ENCODE measurements at regions of chr2 and their contacts with region 1.

Region 1: DNA sequence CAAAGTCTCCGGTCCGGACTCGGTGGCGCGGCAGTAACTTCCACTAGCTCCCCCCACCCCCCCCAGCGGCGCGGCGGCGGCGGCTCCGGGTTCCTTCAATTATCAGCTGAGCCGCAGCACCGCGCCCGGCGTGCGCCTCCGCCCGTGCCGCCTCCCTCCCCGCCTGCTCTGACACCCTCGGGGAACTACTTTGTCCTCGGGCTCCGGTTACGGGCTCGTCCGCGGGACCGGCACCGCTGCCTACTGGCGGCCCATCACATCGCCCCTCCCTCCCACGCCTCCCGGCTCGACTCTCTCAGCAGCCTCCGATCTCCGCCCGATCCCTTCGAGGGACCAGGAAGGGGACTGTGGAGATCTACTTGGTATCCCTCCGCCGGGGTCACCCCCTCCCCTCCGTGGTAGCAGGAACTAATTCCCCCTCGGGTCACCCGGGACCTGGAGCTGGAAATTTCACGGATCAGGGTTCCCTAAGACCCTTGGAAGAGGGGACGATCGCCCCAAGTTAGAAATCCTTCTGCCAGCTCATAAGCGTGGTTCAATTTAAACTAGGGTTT is at the start of gene TRIP12:
- DNase-seq: peak; percentile 98
- ATAC-seq: peak; percentile 90
- H3K4me3 ChIP-seq: peak within 1 kb of the TSS; percentile 75
- H3K27ac ChIP-seq: peak within 1 kb of the TSS; percentile 92
- H3K4me1 ChIP-seq: 0 out of 2 replicates have a peak, but pooled peaks cover 2% of the 10 kb centered on the region
- H3K27me3 ChIP-seq: no peaks in the 10 kb centered on the region
- CTCF ChIP-seq: no peak
- POLR2A ChIP-seq: no peak
- RAD21 ChIP-seq: no peak
- total RNA-seq, gene TRIP12: 209 and 315 TPM in 2 replicates

Region 2: DNA sequence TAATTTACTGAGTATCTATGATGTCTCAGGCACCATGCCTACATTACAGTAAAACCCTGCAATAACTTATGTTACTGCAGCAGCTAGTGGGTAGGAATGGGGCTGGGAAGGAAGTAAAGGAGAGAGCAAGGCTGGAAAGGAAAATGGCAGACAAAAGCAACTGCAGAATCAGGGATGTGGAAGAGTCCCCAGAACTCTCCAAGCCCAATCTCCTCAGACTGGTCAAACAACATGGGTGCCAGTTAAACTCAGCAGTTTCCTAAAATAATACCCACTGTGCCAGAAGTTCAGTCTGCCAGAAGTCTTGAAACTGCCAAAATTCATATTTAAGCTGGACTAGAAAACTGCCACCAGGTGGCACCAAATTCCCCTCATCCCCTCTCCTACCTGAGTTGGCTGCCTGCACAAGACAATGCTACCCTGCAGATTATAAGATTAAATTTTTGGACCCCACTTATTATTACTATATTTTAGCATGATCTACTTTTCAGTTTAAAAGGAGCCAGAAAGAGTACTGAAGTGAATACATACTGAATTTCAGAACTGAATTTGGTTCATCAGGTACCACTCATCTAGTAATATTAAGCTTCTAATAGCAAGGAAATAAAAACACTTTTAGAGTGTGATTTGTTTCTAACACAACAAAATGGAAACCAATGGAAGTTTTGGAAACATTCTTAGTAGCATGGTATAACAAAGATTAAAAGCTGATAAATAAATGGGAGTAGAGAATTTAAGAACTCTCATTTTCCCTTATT is 120.8 kb before region 1 on chr2:
- CTCF ChIA-PET with region 1: no interaction called
- POLR2A ChIA-PET with region 1: no interaction called
- dilution Hi-C with region 1: no loop called
- in situ Hi-C with region 1: no loop called
- intact Hi-C with region 1: loop called (anchors 5 kb)
- DNase-seq: peak; percentile 65
- ATAC-seq: peak; percentile 45
- H3K4me3 ChIP-seq: no peak overlapping the region
- H3K27ac ChIP-seq: peak overlapping the region; percentile 45; the same call in 1 of the 2 replicates
- H3K4me1 ChIP-seq: peaks cover 2% of the 10 kb centered on the region; the same call in 1 of the 2 replicates
- H3K27me3 ChIP-seq: no peaks in the 10 kb centered on the region
- CTCF ChIP-seq: peak; percentile 63
- POLR2A ChIP-seq: no peak
- RAD21 ChIP-seq: peak; percentile 56

Region 3: DNA sequence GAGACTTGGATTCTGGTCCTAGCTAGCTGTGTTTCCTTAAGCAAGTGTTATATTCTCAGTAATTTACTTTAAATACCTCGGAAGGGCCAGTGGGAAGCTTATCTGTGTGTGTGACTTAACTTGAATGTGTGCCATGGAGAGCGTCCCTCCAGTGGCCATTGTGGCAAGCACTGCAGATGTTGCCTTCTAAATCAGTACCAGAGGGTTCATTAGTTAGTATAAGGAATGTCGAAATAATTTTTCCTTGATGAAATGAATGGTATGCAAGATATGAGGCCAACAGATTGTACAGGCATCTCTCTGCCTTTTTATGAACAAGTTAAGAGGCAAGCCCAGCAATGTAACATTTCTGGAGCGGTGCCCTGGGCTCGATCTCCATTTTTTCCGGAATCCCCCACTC is 52.3 kb after region 1 on chr2:
- CTCF ChIA-PET with region 1: interaction called, 3 read pairs
- POLR2A ChIA-PET with region 1: no interaction called
- dilution Hi-C with region 1: no loop called
- in situ Hi-C with region 1: no loop called
- intact Hi-C with region 1: loop called (anchors 2 kb)
- DNase-seq: peak; percentile 78
- ATAC-seq: peak; percentile 95
- H3K4me3 ChIP-seq: no peak overlapping the region
- H3K27ac ChIP-seq: peak overlapping the region; percentile 14; the same call in 1 of the 2 replicates
- H3K4me1 ChIP-seq: peaks cover 2% of the 10 kb centered on the region; the same call in 1 of the 2 replicates
- H3K27me3 ChIP-seq: no peaks in the 10 kb centered on the region
- CTCF ChIP-seq: peak; percentile 38; the same call in 1 of the 2 replicates
- POLR2A ChIP-seq: no peak
- RAD21 ChIP-seq: peak; percentile 18; the same call in 1 of the 2 replicates

Region 4: DNA sequence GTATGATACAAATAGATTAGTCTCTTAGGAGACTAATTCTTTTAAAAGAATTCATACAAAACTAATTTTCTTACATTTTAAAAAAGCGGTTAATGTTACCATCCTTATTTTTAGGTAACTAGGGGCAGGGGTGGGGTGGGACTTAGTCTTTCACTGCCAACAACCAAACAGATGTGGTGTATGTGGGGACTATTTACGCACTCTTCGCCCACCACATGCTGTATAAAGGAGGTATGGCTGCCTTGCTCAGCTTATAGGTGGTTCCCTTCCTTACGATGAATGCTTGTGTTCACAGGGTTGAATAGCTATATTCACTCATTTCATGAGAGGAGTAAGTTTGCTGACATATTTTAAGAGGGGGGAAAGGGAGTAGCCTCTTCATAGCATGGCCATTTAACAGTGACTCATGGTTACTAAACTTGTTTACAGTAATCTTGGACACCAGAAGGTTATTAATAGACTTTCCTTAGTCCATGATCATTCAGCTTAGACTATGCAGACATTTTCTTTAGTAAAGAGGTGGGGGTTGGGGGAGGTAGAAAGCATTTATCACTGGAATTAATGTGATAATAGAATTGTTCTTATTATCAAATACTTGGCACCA is 852.5 kb after region 1 on chr2:
- CTCF ChIA-PET with region 1: no interaction called
- POLR2A ChIA-PET with region 1: no interaction called
- dilution Hi-C with region 1: no loop called
- in situ Hi-C with region 1: no loop called
- intact Hi-C with region 1: loop called (anchors 10 kb)
- DNase-seq: peak; percentile 92
- ATAC-seq: peak; percentile 89
- H3K4me3 ChIP-seq: no peak overlapping the region
- H3K27ac ChIP-seq: peak overlapping the region; percentile 67; the same call in 1 of the 2 replicates
- H3K4me1 ChIP-seq: peaks cover 12% of the 10 kb centered on the region
- H3K27me3 ChIP-seq: no peaks in the 10 kb centered on the region
- CTCF ChIP-seq: no peak
- POLR2A ChIP-seq: no peak
- RAD21 ChIP-seq: no peak

Measured in IMR-90 (cell line).